Gastrocnemius medialis (tissue), 4 donors: ENCODE measurements at regions of chr17 and their contacts with region 1.

Region 1: DNA sequence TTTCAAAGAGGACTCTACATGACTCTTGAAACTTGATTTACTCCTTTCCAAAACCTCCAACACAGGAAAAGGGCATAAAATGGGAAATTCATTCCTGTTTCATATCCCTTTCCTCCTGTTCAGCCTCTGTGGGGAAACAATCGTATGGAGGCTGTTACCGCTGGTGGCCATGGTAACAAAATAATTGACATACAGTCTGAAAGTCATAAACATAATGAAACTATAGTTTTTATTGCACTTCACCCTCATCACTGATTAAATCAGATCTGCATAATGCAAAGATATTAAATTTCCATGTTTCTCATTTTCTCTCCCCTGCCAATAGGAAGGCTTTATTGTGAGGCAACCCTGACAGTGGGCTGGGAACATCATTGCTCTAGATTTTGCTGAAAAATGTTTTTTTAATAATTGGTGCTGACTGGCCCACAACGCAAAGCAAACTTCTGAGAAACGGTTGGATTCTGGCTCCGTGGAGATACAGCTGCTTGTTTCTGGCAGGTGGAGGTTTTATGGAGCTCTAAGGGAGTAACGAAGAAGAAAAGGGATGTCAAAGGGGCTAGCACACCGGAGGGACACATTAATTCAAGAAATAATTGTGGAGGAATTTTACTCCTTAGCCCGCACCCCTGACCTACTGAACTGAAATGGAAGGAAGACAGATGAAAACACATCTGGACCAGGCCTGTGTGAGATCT is 154.2 kb upstream of the SHISA6 start:
- DNase-seq: no peak
- ATAC-seq: no peak
- H3K4me3 ChIP-seq: no peak overlapping the region
- H3K27ac ChIP-seq: no peak overlapping the region
- H3K4me1 ChIP-seq: no peaks in the 10 kb centered on the region
- H3K27me3 ChIP-seq: no peaks in the 10 kb centered on the region
- CTCF ChIP-seq: no peak
- POLR2A ChIP-seq: no peak

Region 2: DNA sequence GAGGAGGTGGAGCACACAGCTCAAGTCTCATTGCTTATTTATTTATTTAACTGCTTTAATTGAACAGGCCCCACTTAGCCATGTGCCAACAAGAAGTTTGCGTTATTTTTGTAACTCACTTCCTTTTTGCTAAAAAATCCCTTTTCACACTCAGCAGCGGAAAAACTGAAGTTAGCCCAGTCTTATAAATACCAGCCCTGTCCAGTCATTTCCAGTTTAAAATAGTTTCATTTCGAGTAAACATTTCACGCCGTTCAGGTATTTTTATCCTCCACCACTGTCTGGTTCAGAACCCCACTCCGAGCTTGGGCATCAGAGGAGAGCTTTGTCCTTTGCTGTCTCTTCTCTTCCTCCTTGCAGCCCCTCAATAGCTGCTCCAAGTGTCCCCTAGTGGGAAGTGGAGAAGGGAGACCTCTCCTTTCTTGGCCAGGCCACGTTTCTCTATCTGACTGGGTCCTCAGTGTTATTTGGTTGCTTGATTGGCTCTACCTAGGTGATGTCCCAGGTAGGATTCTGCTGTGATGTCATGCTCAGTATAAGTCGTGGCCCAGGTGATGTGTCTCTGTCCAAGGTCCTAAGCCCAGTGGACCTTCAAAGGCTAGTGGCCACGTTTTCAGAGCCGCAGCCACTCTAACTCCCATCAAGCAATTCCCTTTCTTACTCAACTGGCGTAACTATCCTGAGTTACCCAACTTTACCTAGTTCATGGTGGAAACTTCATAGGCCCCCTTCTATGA is 835.4 kb before region 1 on chr17:
- in situ Hi-C with region 1: no loop called
- intact Hi-C with region 1: no loop called
- DNase-seq: no peak
- ATAC-seq: no peak
- H3K4me3 ChIP-seq: no peak overlapping the region
- H3K27ac ChIP-seq: no peak overlapping the region
- H3K4me1 ChIP-seq: no peaks in the 10 kb centered on the region
- H3K27me3 ChIP-seq: no peaks in the 10 kb centered on the region
- CTCF ChIP-seq: no peak
- POLR2A ChIP-seq: no peak

Region 3: DNA sequence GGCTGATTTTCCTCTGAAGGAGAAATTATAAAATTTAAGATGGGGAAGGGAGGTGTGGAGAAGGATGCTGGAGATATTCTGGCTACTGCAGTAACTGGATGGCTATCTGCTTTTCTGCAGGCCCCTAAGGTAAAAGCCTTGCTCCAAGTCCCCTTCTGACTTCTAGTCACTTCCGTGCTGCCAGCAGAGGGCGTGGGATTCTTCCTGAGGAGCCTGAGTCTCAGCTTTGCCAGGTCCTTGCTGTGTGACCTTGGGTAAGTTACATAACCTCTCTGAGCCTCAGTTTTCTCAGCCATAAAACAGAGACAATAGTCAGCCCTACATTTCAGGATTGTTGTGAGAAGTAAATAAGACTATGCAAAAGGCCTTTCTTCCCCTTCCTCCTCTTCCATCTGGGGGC is 332.7 kb before region 1 on chr17:
- in situ Hi-C with region 1: no loop called
- intact Hi-C with region 1: no loop called
- DNase-seq: no peak
- ATAC-seq: no peak
- H3K4me3 ChIP-seq: no peak overlapping the region
- H3K27ac ChIP-seq: no peak overlapping the region
- H3K4me1 ChIP-seq: peaks cover 6 to 24% of the 10 kb centered on the region in 2 donors
- H3K27me3 ChIP-seq: no peaks in the 10 kb centered on the region
- CTCF ChIP-seq: no peak
- POLR2A ChIP-seq: no peak

Region 4: DNA sequence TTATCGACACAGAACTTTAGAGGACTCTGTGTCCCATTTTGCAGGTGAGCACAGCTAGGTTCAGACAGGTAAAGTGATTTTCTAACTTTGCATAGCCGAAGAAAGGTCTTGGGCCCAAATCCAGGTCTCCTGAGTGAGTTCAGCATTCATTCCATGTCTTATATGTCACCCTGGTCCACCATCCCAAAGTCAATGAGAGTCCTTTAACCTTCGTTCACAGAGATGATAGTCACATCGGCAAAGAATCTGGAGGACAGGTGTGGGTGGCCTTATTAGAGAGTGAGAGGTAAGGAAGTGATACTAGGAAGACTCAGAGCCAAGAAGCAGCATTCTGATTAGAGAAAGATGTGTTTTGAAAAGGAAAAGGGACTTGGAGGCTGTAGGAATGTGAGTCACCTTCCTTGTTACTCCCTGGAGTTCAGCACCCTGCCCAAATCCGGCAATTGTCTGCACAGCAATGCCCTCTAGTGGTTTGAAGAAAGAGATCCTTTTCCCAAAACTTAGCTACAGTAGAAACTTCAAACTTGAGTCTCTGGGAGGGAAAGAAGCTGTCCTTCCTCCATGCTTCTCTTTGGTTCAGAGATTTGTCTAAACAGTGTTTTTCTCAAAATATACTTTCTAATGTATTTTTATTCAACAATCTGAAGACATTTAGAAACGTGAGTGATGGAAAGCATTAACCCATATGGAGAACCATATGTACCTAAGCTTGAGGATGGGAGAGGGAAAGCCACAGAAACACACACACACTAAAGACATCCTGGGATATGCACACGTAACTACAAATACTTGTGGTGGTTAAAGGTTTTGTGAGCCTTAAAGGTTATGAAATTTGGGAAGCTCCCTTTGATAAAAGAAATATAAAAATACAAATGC is 57.8 kb after region 1 on chr17:
- in situ Hi-C with region 1: loop called in 1 of 4 experiments (anchors 10 kb)
- intact Hi-C with region 1: no loop called
- DNase-seq: no peak
- ATAC-seq: no peak
- H3K4me3 ChIP-seq: no peak overlapping the region
- H3K27ac ChIP-seq: no peak overlapping the region
- H3K4me1 ChIP-seq: no peaks in the 10 kb centered on the region
- H3K27me3 ChIP-seq: no peaks in the 10 kb centered on the region
- CTCF ChIP-seq: peak in 3 of 5 experiments; percentile 16 to 48 (median 38)
- POLR2A ChIP-seq: no peak